Esophagus muscularis mucosa (tissue), 4 donors: ENCODE measurements at regions of chr19 and their contacts with region 1.

Region 1: DNA sequence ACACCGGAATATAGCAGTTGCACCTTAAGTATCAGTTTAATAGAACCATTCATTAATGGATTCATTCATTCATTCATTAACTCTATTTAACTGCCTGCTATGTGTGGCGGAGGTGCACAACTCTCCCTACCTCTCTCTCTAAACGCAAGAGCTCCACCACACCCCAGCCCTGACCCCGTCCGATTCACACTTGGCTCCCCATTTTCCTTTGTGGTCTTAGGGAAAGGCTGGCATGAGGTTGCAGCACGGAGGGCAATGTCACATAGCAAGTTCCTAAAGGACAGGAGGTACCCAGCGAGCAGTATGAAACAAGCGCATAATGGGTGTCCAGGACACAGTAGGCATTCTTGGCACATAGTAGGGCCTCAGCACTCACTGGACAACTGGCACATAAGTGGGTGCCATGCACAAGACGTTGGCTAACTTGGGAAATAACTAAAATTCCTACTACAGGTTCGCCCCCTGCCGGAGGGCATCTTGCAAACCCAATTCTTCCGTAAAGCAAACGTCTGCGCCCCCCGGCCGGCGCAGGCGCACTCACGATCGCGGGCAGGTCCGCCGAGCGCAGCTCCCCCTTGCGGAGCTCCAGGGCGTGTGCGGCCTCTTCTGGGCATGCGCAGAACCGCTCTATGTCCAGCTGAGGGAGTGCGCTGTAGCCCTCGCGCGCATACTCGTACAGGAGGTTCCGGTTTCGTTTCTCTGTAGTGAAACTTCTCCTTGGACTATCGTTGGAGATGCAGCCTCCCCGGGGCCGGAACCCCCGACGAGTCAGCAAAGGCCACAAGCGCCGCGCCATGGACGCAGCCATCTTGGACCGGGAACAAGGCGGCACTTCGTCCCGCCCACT is at the start of gene SARS2:
- DNase-seq: peak; percentile 99
- H3K4me3 ChIP-seq: peak within 1 kb of the TSS; percentile 65 to 75 (median 68)
- H3K27ac ChIP-seq: peak within 1 kb of the TSS; percentile 85 to 90 (median 88)
- H3K4me1 ChIP-seq: peaks cover 29 to 33% (median 31%) of the 10 kb centered on the region in 4 donors
- H3K27me3 ChIP-seq: no peaks in the 10 kb centered on the region
- CTCF ChIP-seq: peak in 2 of 3 experiments; percentile 100
- EP300 ChIP-seq: no peak
- POLR2A ChIP-seq: no peak
- total RNA-seq, gene SARS2: 6.8 to 14.6 (median 9.1) TPM

Region 2: DNA sequence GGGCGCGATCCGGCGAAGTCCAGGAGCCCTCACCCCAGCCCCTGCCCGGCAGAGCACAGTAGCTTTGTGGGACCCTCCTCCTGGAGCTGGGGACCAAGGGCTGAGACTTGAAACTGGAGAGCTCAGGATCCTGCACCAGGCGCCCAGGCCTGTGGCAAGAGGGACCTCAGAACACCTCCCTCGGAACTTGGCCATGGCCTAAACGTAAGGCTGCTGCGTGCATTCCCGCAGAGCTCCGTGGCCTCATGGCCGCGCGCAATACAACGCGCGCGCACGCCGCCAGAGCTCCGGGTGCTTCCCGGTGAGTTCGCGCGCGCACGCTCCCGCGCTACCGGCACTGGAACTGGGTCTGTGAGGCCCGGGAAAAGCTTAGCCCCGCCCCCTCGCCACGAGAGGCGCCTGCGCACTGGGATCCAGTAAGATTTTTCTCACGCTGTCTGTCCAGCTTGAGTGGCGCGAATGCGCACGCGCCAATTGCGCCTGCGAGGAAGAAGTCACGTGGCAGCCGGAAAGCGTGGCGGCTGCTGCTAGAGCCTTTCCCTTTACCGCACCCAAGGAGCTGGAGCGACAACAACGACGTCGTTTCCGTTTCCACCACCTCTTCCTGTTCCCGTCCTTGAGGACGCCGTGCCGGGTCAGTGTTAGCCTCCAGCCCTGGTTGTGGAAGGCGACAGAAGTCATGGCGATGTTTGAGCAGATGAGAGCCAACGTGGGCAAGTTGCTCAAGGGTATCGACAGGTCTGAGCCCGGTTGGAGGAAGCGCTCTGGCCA is 311.4 kb before region 1 on chr19 and contains the start of gene EIF3K:
- intact Hi-C with region 1: loop called (anchors 10 kb)
- DNase-seq: peak; percentile 99
- H3K4me3 ChIP-seq: peak within 1 kb of the TSS; percentile 71 to 91 (median 82)
- H3K27ac ChIP-seq: peak within 1 kb of the TSS; percentile 87 to 92 (median 87)
- H3K4me1 ChIP-seq: peaks cover 21 to 31% (median 23%) of the 10 kb centered on the region in 4 donors
- H3K27me3 ChIP-seq: no peaks in the 10 kb centered on the region
- CTCF ChIP-seq: peak in 2 of 3 experiments; percentile 11 to 40
- EP300 ChIP-seq: no peak
- POLR2A ChIP-seq: peak; percentile 68
- total RNA-seq, gene EIF3K: 333 to 570 (median 446) TPM

Region 3: GRCh38 chr19:38769635-38770211 is 160.4 kb before region 1 on chr19:
- intact Hi-C with region 1: no loop called
- DNase-seq: peak; percentile 96
- H3K4me3 ChIP-seq: peak overlapping the region; percentile 33 to 53 (median 42)
- H3K27ac ChIP-seq: peak overlapping the region; percentile 42 to 67 (median 48)
- H3K4me1 ChIP-seq: peaks cover 8 to 10% (median 9%) of the 10 kb centered on the region in 4 donors
- H3K27me3 ChIP-seq: no peaks in the 10 kb centered on the region
- CTCF ChIP-seq: peak; percentile 62 to 89 (median 85)
- EP300 ChIP-seq: no peak
- POLR2A ChIP-seq: no peak

Region 4: GRCh38 chr19:38877781-38878574 is 52.2 kb before region 1 on chr19 and contains the start of gene RINL:
- intact Hi-C with region 1: no loop called
- DNase-seq: no peak
- H3K4me3 ChIP-seq: peak within 1 kb of the TSS in 1 of 4 donors; percentile 23
- H3K27ac ChIP-seq: peak within 1 kb of the TSS in 3 of 4 donors; percentile 21 to 62 (median 31)
- H3K4me1 ChIP-seq: peaks cover 11 to 14% (median 14%) of the 10 kb centered on the region in 4 donors
- H3K27me3 ChIP-seq: no peaks in the 10 kb centered on the region
- CTCF ChIP-seq: no peak
- EP300 ChIP-seq: no peak
- POLR2A ChIP-seq: no peak
- total RNA-seq, gene RINL: 4.6 to 10.4 (median 6.6) TPM

Region 5: DNA sequence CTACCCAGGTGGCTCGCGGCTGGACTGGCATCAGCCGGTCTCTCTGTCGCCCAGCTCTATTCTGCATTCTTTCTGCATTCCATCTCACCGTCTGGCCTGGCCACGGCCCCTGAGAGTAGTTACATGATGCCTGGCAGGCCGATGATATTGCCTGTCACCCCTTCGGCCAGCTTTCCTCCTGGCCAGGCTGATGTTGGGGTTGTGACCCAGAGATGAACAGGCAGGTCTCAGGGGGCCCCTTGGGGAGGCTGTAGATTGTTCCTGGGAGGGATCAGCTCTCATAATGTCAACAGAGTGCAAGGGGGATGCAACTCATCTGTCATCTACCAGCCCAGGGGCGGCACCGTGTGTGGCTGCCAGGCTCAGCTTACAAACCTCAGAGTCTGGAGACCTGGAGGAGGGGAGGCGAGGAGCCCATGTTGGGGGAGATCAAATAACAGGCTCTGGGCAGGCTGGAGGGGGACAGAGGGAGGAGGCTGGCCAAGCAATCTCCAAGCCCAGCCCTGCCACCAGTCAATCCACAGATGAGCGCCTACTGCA is 59.0 kb after region 1 on chr19:
- intact Hi-C with region 1: no loop called
- DNase-seq: no peak
- H3K4me3 ChIP-seq: no peak overlapping the region
- H3K27ac ChIP-seq: no peak overlapping the region
- H3K4me1 ChIP-seq: no peaks in the 10 kb centered on the region
- H3K27me3 ChIP-seq: peaks cover 0 to 39% (median 0%) of the 10 kb centered on the region in 4 donors
- CTCF ChIP-seq: no peak
- EP300 ChIP-seq: no peak
- POLR2A ChIP-seq: no peak